Activated B cell treated with CpG ODN at 0.5 μM for 24 hours (primary cell): ENCODE measurements at regions of chr4 and their contacts with region 1.

Region 1: GRCh38 chr4:1011022-1011694 is at the start of gene FGFRL1:
- DNase-seq: peak; percentile 88
- ATAC-seq: peak; percentile 69
- H3K4me3 Mint-ChIP-seq: peak within 1 kb of the TSS; percentile 86
- H3K27ac Mint-ChIP-seq: peak within 1 kb of the TSS; percentile 55
- H3K4me1 Mint-ChIP-seq: peaks cover 15% of the 10 kb centered on the region
- H3K27me3 Mint-ChIP-seq: peaks cover 18% of the 10 kb centered on the region
- CTCF ChIP-seq: no peak
- total RNA-seq, gene FGFRL1: 4.2 and 5.6 TPM in 2 replicates

Region 2: GRCh38 chr4:781493-782216 is 229.5 kb before region 1 on chr4:
- CTCF ChIA-PET with region 1: no interaction called
- POLR2A ChIA-PET with region 1: interaction called, 4 read pairs
- intact Hi-C with region 1: loop called (anchors 2 kb)
- DNase-seq: peak; percentile 97
- ATAC-seq: peak; percentile 93
- H3K4me3 Mint-ChIP-seq: peak overlapping the region; percentile 91
- H3K27ac Mint-ChIP-seq: peak overlapping the region; percentile 87
- H3K4me1 Mint-ChIP-seq: peaks cover 47% of the 10 kb centered on the region
- H3K27me3 Mint-ChIP-seq: peaks cover 18% of the 10 kb centered on the region
- CTCF ChIP-seq: no peak

Region 3: GRCh38 chr4:973431-974397 is 37.4 kb before region 1 on chr4 and contains the start of gene DGKQ:
- CTCF ChIA-PET with region 1: no interaction called
- POLR2A ChIA-PET with region 1: no interaction called
- intact Hi-C with region 1: loop called (anchors 2 kb)
- DNase-seq: peak; percentile 87
- ATAC-seq: peak; percentile 98
- H3K4me3 Mint-ChIP-seq: peak within 1 kb of the TSS; percentile 60
- H3K27ac Mint-ChIP-seq: no peak within 1 kb of the TSS
- H3K4me1 Mint-ChIP-seq: peaks cover 13% of the 10 kb centered on the region
- H3K27me3 Mint-ChIP-seq: no peaks in the 10 kb centered on the region
- CTCF ChIP-seq: no peak
- total RNA-seq, gene DGKQ: 16.3 and 16.4 TPM in 2 replicates

Region 4: DNA sequence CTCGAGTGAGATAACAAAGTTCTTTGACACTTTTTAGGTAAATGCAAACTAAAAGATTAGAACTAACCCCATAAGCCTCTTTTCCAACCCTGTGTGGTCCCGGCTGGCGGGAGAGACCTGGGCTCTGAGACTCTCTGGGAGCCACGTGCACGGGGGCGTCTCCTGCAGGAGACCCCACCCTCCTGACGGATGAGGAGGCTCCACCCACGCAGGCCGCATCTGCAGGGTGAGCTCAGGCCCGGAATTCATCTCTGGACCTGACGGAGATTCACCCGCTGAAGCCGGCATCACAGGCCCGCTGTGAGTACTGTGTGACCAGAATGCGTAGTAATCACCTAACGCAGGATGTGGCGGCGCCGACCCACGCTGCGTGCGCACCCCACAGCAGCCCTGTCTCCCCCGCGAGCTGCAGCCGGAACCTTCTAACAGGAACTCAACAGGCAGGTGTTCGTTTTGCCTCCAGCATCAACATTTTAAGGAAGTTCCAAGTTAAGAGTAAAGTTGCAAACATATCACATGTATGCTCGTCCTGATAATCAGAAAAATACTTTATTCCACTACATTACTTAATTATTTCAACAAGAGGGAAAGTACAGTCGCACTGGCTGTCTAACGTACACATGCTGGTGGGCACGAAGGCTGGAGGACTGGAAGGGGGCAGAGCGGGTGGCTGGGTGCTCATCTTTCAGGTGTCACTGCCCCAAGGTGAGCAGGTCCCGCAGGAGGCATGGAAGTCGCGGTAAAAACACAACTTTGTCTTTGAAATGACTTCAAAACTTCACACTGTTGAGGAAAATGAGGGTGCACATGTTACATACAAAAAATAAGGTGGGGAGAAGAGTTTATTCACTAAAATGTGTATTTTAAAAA is 44.8 kb after region 1 on chr4:
- CTCF ChIA-PET with region 1: no interaction called
- POLR2A ChIA-PET with region 1: no interaction called
- intact Hi-C with region 1: loop called (anchors 2 kb)
- DNase-seq: peak; percentile 64
- ATAC-seq: peak; percentile 95
- H3K4me3 Mint-ChIP-seq: peak overlapping the region; percentile 68
- H3K27ac Mint-ChIP-seq: peak overlapping the region; percentile 67
- H3K4me1 Mint-ChIP-seq: peaks cover 15% of the 10 kb centered on the region
- H3K27me3 Mint-ChIP-seq: peaks cover 14% of the 10 kb centered on the region
- CTCF ChIP-seq: no peak

Region 5: DNA sequence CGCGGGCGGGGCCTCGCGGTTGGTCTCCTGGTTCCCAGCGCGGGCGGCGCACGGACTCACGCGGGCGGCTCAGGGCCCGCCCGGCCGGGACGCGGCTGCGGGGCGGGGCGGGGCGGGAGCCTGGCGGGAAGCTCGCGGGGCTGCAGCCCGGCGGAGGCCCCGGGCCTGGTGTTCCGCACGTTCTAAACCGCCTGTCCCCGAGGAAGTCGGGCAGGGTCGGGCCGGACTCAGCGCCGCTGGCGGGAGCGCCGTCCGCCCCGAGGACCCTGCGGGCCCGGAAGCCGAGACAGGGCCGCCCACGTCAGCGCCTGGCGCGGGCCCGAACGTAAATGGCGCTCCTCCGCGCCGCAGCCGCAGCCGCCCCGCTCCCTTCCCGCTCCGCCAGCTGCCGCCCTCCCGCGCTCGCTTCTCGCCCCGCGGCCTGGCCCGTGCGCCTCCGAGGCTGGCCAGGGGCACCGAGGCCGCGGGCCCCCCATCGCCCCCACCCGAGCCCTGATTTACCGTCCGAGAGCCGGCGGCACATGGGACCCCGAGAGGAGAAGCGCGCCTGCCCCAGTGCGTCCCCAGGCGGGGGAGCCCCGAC is 238.1 kb after region 1 on chr4:
- CTCF ChIA-PET with region 1: no interaction called
- POLR2A ChIA-PET with region 1: no interaction called
- intact Hi-C with region 1: loop called (anchors 2 kb)
- DNase-seq: peak; percentile 87
- ATAC-seq: peak; percentile 70
- H3K4me3 Mint-ChIP-seq: peak overlapping the region; percentile 88
- H3K27ac Mint-ChIP-seq: peak overlapping the region; percentile 93
- H3K4me1 Mint-ChIP-seq: peaks cover 59% of the 10 kb centered on the region
- H3K27me3 Mint-ChIP-seq: no peaks in the 10 kb centered on the region
- CTCF ChIP-seq: no peak

Region 6: DNA sequence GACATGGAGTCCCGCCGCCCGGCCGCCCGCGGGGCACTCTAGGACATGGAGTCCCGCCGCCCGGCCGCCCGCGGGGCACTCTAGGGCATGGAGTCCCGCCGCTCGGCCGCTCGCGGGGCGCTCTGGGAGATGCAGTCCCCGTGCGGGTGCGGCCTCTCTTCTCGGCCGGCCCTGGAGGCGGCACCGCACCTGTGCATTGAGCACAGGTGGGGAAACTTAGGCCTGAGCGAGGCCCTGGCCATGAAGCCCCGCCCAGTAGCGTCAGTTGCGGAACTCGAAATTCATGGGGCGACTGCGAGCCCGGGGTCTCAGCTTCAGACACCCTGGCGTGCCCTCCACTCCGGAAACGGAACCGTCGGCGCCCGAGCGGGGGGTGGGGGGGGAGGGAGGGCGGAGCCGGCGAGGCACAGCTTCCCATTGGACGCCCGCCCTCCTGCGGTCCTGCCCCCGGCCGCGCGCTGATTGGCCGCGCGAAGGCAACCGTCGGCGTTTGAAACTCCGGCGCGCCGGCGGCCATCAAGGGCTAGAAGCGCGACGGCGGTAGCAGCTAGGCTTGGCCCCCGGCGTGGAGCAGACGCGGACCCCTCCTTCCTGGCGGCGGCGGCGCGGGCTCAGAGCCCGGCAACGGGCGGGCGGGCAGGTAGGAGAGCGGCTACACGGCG is 710.0 kb after region 1 on chr4 and contains the starts of genes TACC3 and TMEM129:
- CTCF ChIA-PET with region 1: no interaction called
- POLR2A ChIA-PET with region 1: no interaction called
- intact Hi-C with region 1: loop called (anchors 5 kb)
- DNase-seq: peak; percentile 87
- ATAC-seq: peak; percentile 83
- H3K4me3 Mint-ChIP-seq: peak within 1 kb of the TSS; percentile 89
- H3K27ac Mint-ChIP-seq: peak within 1 kb of the TSS; percentile 92
- H3K4me1 Mint-ChIP-seq: peaks cover 64% of the 10 kb centered on the region
- H3K27me3 Mint-ChIP-seq: no peaks in the 10 kb centered on the region
- CTCF ChIP-seq: no peak
- total RNA-seq, gene TACC3: 16.1 and 20.5 TPM in 2 replicates
- total RNA-seq, gene TMEM129: 23.6 and 23.7 TPM in 2 replicates